ENCODE measurements at regions of chr10 and their contacts with region 1.

Region 1: DNA sequence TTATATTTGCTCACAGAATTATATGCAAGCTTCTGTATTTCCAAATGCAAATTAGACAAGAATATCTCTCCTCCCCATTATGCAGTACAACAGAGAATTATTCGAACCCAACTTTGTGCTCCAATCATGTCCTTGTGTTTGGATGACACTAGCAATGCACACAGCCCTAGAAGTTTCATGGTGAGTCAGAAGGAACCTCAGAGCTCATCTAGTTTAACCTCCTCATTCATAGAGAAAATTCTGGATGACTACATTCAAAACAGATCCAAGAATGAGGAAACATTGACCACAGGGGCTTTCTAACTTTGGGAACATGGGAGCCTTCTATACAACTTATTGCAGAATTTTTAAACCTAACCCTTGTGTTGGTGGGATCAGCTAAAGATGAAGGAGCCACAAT is 12.8 kb upstream of the ARID5B start:
- DNase-seq: no peak
- ATAC-seq: no peak
- H3K4me3 ChIP-seq: no peak overlapping the region
- H3K27ac ChIP-seq: no peak overlapping the region
- H3K4me1 ChIP-seq: peaks cover 0 to 5% (median 0%) of the 10 kb centered on the region in 9 donors
- H3K27me3 ChIP-seq: no peaks in the 10 kb centered on the region
- CTCF ChIP-seq: no peak

Region 2: DNA sequence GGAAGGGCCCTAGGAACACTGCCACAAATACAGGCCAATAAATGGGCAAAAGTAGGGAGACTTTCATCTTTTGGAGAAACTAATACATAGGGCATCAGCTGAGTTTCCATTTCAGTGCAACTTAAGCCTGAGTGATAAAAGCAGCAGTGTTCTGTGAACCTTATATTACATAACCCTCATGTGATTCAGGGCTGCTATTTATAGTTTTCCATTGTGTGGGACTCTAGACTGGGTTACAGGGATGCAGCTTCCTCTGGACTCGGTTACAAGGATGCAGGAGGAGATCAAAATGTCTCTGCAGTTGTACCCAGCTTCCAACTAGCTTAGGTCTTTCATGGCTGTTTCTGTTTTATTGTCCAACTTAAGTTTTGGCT is 1077.9 kb before region 1 on chr10:
- intact Hi-C with region 1: loop called in 1 of 10 experiments (anchors 5 kb)
- DNase-seq: peak in 1 of 2 donors; percentile 33
- ATAC-seq: peak; percentile 90 to 99 (median 97)
- H3K4me3 ChIP-seq: no peak overlapping the region
- H3K27ac ChIP-seq: peak overlapping the region in 8 of 10 donors; percentile 35 to 90 (median 76)
- H3K4me1 ChIP-seq: peaks cover 9 to 21% (median 16%) of the 10 kb centered on the region in 9 donors
- H3K27me3 ChIP-seq: no peaks in the 10 kb centered on the region
- CTCF ChIP-seq: no peak

Region 3: GRCh38 chr10:61992671-61993668 is 104.2 kb after region 1 on chr10:
- intact Hi-C with region 1: no loop called
- DNase-seq: peak in 1 of 2 donors; percentile 54
- ATAC-seq: peak; percentile 89 to 97 (median 94)
- H3K4me3 ChIP-seq: peak overlapping the region in 7 of 10 donors; percentile 13 to 37 (median 32)
- H3K27ac ChIP-seq: peak overlapping the region in 9 of 10 donors; percentile 44 to 90 (median 76)
- H3K4me1 ChIP-seq: peaks cover 4 to 66% (median 35%) of the 10 kb centered on the region in 9 donors
- H3K27me3 ChIP-seq: no peaks in the 10 kb centered on the region
- CTCF ChIP-seq: no peak

Region 4: DNA sequence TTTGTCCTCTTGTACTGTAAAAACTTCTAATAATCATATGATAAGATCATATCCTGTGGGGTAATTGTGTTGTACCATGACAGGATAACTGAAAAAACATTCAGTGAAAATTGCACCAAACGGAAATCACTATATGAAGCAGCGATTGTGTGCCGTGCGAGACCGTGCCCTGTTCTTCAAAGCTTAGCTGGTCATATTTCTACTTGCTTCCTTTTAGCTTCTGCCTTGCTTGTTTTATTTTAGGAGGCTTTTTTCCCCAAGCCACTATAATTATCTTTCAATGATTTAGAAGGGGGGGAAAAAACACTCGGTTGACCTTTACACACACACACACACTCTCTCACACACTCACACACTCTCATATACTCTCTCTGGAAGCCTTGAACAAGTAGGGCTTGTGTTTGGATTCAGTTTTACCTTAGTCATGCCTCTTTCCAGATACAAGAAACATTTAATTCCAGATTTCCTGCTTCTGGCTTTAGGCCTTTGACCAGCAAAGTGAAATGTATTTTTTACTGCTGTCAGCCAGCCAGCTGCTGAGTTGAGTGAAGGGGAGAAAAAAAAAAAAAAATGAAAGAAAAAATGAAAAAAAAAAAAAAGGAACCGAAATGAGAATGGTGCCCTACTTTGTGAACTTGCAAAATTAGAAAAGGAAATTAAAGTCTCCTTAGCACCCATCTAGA is 194.1 kb after region 1 on chr10:
- intact Hi-C with region 1: no loop called
- DNase-seq: peak in 1 of 2 donors; percentile 43
- ATAC-seq: peak; percentile 36 to 68 (median 54)
- H3K4me3 ChIP-seq: peak overlapping the region in 7 of 10 donors; percentile 1 to 27 (median 17)
- H3K27ac ChIP-seq: peak overlapping the region; percentile 63 to 93 (median 88)
- H3K4me1 ChIP-seq: peaks cover 18 to 69% (median 59%) of the 10 kb centered on the region in 9 donors
- H3K27me3 ChIP-seq: no peaks in the 10 kb centered on the region
- CTCF ChIP-seq: no peak

Region 5: DNA sequence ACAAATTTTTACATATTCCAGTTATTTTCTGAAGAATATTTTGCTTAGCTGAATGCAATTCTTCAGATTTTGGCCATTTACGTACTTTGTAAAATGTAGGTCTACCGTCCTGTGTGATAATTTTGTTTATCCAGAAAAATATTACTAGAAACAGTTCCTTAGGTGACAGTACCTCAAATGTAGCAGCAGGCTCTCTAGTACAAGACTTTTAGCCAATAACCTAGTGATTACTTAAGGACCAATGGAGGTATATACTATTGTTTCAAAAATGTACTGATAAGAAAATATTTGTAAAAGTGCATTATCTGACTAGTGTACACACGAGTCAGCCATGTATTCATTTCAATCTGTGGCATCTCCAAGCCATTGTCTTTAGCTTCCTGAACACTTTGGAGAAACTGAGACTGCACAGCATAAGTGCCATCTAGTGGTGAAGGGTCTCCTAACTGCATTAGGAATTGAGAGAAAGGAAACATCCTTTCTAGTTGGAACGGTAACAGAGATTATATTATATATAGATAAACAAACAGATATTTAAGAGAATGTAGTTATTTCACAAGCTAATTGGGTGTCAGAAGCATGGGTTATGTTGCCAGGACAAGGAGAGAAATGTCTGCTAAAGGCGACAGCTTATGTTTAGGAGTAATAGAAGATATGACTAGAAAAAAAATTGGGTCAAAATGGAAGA is 356.2 kb after region 1 on chr10:
- intact Hi-C with region 1: loop called in 4 of 10 experiments (anchors 5 to 10 kb)
- DNase-seq: peak in 1 of 2 donors; percentile 70
- ATAC-seq: peak; percentile 41 to 90 (median 84)
- H3K4me3 ChIP-seq: peak overlapping the region in 2 of 10 donors; percentile 12 to 41
- H3K27ac ChIP-seq: peak overlapping the region in 1 of 10 donors; percentile 78
- H3K4me1 ChIP-seq: peaks cover 0 to 32% (median 3%) of the 10 kb centered on the region in 9 donors
- H3K27me3 ChIP-seq: no peaks in the 10 kb centered on the region
- CTCF ChIP-seq: peak; percentile 70 to 95 (median 91)

Measured in heart right ventricle (tissue), 16 donors.